ENCODE measurements at regions of chr2 and their contacts with region 1.

Region 1: DNA sequence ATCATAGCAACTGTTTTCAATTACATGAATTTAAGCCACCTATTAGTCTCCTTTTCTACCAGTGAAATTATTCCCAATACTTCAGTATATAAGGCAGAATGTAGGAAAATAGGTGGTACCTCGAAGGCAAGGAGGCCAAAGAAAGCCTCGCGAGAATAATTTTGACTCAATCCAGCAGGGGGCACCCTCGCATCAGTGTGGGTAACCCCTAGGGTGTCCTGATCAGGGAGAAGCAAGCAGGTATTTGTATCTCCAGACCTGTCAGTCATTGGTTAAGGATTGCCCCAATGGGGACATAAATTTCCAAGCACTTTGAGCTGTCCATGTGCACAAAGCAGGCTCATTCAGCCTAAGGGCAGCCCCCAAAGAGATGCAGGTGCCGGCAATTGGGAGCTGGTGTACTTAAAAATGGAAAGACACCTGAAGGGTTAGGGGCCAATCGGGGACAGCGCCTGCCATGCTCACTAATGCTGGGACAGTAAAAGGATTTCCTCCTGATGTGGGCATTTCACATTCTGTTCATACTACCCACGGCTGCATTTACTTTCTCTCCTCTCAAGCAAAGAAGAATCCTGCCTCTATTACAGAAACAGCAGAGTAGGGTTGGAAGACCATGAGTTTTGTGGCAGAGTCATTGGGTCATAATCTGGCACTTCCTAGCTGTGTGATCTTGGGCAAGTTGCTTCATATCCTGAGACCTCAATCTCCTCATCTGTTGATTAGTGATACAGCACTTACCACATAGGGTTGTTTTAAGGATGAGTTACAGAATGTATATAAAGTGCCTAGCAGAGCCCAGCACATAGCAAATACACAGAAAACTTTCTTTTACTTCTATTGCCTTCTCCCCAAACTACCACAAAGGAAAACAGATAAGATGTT is 136.1 kb downstream of the ICOS start:
- DNase-seq: peak; percentile 71
- ATAC-seq: peak; percentile 80
- H3K4me3 Mint-ChIP-seq: no peak overlapping the region
- H3K27ac Mint-ChIP-seq: no peak overlapping the region
- H3K4me1 Mint-ChIP-seq: no peaks in the 10 kb centered on the region
- H3K27me3 Mint-ChIP-seq: peaks cover 2% of the 10 kb centered on the region

Region 2: DNA sequence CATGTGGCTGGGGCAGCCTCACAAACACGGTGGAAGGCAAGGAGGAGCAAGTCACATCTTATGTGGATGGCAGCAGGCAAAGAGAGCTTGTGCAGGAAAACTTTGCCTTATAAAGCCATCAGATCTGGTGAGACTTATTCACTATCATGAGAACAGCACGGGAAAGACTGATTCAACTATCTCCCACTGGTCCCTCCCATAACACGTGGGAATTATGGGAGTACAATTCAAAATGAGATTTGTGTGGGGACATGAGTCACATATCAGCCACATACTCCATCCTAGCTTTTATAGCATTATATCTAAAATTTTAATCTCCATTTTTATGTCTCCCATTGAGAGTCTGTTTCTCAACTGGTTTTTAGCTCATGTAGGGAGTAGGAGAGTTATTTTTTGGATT is 90.4 kb before region 1 on chr2:
- CTCF ChIA-PET with region 1: no interaction called
- POLR2A ChIA-PET with region 1: no interaction called
- DNase-seq: no peak
- ATAC-seq: no peak
- H3K4me3 Mint-ChIP-seq: no peak overlapping the region
- H3K27ac Mint-ChIP-seq: no peak overlapping the region
- H3K4me1 Mint-ChIP-seq: peaks cover 2% of the 10 kb centered on the region
- H3K27me3 Mint-ChIP-seq: no peaks in the 10 kb centered on the region

Region 3: GRCh38 chr2:204051476-204051875 is 21.2 kb before region 1 on chr2:
- CTCF ChIA-PET with region 1: interaction called, 16 read pairs
- POLR2A ChIA-PET with region 1: no interaction called
- DNase-seq: no peak
- ATAC-seq: no peak
- H3K4me3 Mint-ChIP-seq: no peak overlapping the region
- H3K27ac Mint-ChIP-seq: no peak overlapping the region
- H3K4me1 Mint-ChIP-seq: peaks cover 15% of the 10 kb centered on the region
- H3K27me3 Mint-ChIP-seq: peaks cover 2% of the 10 kb centered on the region

Region 4: DNA sequence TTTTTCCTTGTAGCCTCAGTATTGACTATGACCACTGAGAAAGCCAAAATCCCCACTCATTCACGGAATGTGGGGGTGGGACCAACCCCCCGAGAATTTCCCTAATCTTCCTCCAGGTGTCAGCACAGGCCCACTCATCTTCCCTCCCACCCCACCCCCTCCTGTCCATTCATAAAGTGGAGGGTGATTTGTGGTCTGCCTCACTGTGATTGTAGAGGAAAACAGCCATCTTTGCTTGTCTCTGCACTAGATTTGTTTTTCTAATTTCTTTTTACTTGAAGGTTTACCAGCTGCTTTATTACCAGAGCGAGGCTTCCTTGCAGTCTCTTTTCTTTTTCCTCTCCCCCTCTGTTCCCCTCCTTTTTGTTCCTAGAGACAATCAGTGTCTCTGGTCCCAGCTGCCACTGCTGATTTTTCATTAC is 35.7 kb after region 1 on chr2:
- CTCF ChIA-PET with region 1: interaction called, 13 read pairs
- POLR2A ChIA-PET with region 1: no interaction called
- DNase-seq: peak; percentile 69
- ATAC-seq: peak; percentile 52
- H3K4me3 Mint-ChIP-seq: peak overlapping the region; percentile 45
- H3K27ac Mint-ChIP-seq: peak overlapping the region; percentile 75
- H3K4me1 Mint-ChIP-seq: peaks cover 52% of the 10 kb centered on the region
- H3K27me3 Mint-ChIP-seq: peaks cover 17% of the 10 kb centered on the region

Region 5: GRCh38 chr2:204135752-204136151 is 63.1 kb after region 1 on chr2:
- CTCF ChIA-PET with region 1: interaction called, 11 read pairs
- POLR2A ChIA-PET with region 1: no interaction called
- DNase-seq: no peak
- ATAC-seq: no peak
- H3K4me3 Mint-ChIP-seq: no peak overlapping the region
- H3K27ac Mint-ChIP-seq: no peak overlapping the region
- H3K4me1 Mint-ChIP-seq: no peaks in the 10 kb centered on the region
- H3K27me3 Mint-ChIP-seq: peaks cover 7% of the 10 kb centered on the region

Region 6: GRCh38 chr2:204166961-204167360 is 94.3 kb after region 1 on chr2:
- CTCF ChIA-PET with region 1: no interaction called
- POLR2A ChIA-PET with region 1: no interaction called
- DNase-seq: no peak
- ATAC-seq: no peak
- H3K4me3 Mint-ChIP-seq: no peak overlapping the region
- H3K27ac Mint-ChIP-seq: no peak overlapping the region
- H3K4me1 Mint-ChIP-seq: no peaks in the 10 kb centered on the region
- H3K27me3 Mint-ChIP-seq: peaks cover 13% of the 10 kb centered on the region

Measured in activated CD8-positive, alpha-beta T cell treated with anti-CD3 and anti-CD28 coated beads, Interleukin-2, amount 10 ng/mL, durations not matched to agents 7 days and 5 days (primary cell).